ENCODE measurements at regions of chr2 and their contacts with region 1.

Region 1: DNA sequence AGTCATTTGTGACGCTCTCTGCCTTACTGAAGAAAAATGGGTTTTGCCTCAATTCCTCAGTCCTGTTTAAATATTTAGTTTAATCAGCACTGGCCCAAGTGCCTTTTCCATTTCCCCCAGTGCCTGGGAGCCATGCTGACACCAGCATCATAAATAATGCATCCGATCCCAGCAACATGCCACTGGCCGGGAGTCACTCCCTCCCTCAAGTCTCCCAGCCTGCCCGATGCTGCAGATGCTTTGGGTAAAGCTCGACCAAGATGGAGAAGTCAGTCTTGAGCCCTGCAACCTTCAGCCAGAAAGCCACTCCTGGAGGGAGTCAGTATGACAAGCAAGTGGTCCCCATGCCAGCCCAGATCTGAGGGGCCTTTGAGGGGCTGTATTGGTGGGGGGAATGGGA is 12.1 kb upstream of the MTA3 start:
- DNase-seq: no peak
- H3K4me3 ChIP-seq: no peak overlapping the region
- H3K27ac ChIP-seq: no peak overlapping the region
- H3K4me1 ChIP-seq: peaks cover 36% of the 10 kb centered on the region
- H3K27me3 ChIP-seq: no peaks in the 10 kb centered on the region
- CTCF ChIP-seq: no peak

Region 2: GRCh38 chr2:42545023-42545721 is 11.2 kb before region 1 on chr2:
- CTCF ChIA-PET with region 1: interaction called, 12 read pairs
- POLR2A ChIA-PET with region 1: no interaction called
- intact Hi-C with region 1: no loop called
- DNase-seq: no peak
- H3K4me3 ChIP-seq: no peak overlapping the region
- H3K27ac ChIP-seq: no peak overlapping the region
- H3K4me1 ChIP-seq: peaks cover 14% of the 10 kb centered on the region; the same call in 1 of the 2 replicates
- H3K27me3 ChIP-seq: no peaks in the 10 kb centered on the region
- CTCF ChIP-seq: no peak